Activated CD4-positive, alpha-beta memory T cell treated with anti-CD3 and anti-CD28 coated beads for 36 hours (primary cell): ENCODE measurements at regions of chr15 and their contacts with region 1.

Region 1: DNA sequence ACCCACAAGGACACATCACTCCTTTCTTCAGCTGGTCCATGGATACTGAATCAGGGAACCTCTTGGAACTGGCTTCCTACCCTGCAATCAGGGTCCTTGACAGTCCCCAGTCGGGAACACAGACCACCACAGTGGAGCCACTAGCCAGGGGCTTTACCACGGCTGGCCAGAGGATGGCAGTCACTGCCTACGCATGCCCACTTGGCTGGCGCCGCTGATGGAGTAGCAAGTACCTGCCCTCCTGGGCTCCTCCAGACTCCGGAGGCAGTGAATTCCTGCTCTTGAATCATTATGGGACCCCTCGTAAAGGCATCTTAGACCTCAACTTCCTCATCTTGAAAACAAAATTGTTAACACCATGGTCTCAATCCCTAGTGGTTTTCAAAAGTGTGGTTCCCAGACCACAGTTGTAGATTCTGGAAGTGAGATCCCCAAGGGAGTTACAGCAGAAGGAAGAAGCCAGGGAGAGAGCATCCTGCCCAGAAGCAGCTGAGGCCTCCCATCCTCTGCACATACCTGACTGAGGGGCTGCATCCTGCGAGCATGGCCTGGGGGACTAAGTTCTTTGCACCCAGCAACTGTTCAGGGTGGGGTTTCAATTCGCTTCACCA is 9.1 kb upstream of the SKIC8 start:
- DNase-seq: peak; percentile 73
- H3K4me3 Mint-ChIP-seq: no peak overlapping the region
- H3K27ac Mint-ChIP-seq: no peak overlapping the region
- H3K4me1 Mint-ChIP-seq: no peaks in the 10 kb centered on the region
- H3K27me3 Mint-ChIP-seq: peaks cover 6% of the 10 kb centered on the region

Region 2: DNA sequence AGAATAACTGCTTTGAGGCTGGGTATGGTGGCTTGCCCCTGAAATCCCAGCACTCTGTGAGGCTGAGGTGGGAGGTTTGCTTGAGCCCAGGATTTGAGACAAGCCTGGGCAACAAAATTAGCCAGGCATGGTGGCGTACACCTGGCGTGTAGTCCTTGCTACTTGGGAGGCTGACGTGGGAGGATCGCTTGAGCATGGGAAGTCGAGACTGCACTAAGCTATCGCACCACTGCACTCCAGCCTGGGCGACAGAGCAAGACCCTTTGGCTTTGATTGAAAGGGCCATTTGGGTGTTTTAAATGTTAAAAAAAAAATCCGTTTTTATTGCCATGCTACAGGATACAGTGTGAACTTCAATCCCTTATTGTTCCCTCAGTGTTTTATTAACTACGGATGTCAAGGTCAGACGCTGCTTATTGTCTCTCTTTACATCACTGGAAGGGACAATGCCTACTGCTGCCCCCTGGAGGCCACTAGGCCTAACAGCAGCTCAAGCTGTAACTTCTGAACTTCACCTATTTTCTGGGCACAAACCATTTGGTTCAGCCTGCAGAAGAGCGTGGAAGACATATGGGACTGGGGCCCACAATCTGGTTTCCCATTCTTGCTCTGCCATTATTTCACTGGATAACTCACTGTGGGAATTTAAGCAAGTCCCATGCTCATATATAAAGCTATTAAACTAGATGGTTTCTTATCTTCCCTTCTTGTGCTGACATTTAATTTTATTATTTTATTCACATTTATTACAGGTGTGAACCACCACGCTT is 114.2 kb after region 1 on chr15:
- CTCF ChIA-PET with region 1: interaction called, 35 read pairs
- POLR2A ChIA-PET with region 1: no interaction called
- intact Hi-C with region 1: loop called (anchors 1 kb)
- DNase-seq: peak; percentile 76
- H3K4me3 Mint-ChIP-seq: no peak overlapping the region
- H3K27ac Mint-ChIP-seq: no peak overlapping the region
- H3K4me1 Mint-ChIP-seq: peaks cover 17% of the 10 kb centered on the region
- H3K27me3 Mint-ChIP-seq: peaks cover 4% of the 10 kb centered on the region